Heart right ventricle (tissue), 16 donors: ENCODE measurements at regions of chr12 and their contacts with region 1.

Region 1: DNA sequence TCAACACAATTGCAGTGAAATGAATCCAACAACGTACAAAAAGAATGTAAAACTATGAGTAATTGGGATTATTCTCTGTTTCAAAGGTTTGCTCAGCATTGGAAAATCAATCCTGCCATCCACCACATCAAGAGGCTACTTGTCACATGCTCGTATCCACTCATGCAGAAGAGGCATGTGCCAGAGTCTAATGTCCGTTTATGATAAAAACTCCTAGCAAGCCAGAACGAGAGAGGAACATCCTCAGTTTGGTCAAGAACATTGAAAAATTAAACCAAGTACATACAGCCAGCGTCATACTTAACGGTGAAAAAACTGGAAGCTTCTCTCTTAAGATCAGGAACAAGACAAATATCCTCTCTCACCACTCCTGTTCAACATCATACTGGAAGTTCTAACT is 563.9 kb upstream of the TMEM132C start:
- DNase-seq: no peak
- ATAC-seq: no peak
- H3K4me3 ChIP-seq: no peak overlapping the region
- H3K27ac ChIP-seq: no peak overlapping the region
- H3K4me1 ChIP-seq: no peaks in the 10 kb centered on the region
- H3K27me3 ChIP-seq: peaks cover 0 to 11% (median 0%) of the 10 kb centered on the region in 7 donors
- CTCF ChIP-seq: no peak

Region 2: DNA sequence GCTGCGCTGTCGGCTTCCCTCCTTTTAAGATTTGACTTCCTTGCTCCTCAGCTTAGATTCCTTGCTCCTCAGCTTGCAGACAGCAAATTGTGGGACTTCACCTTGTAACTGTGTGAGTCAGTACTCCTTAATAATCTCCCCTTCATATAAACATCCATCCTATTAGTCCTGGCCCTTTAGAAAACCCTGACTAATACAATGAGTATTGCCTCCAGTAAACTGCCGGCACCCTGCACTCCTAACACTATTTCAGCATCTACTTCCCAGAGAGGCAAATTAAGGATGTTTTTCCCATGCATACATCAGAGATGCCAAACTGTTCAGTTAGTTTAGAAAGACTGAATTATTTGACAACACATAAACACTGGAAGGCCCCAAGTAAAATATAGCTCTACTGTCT is 47.3 kb before region 1 on chr12:
- intact Hi-C with region 1: no loop called
- DNase-seq: no peak
- ATAC-seq: no peak
- H3K4me3 ChIP-seq: no peak overlapping the region
- H3K27ac ChIP-seq: no peak overlapping the region
- H3K4me1 ChIP-seq: no peaks in the 10 kb centered on the region
- H3K27me3 ChIP-seq: peaks cover 0 to 4% (median 0%) of the 10 kb centered on the region in 7 donors
- CTCF ChIP-seq: no peak

Region 3: GRCh38 chr12:127690161-127690560 is 12.9 kb before region 1 on chr12:
- intact Hi-C with region 1: loop called in 1 of 10 experiments (anchors 1 kb)
- DNase-seq: no peak
- ATAC-seq: no peak
- H3K4me3 ChIP-seq: no peak overlapping the region
- H3K27ac ChIP-seq: no peak overlapping the region
- H3K4me1 ChIP-seq: no peaks in the 10 kb centered on the region
- H3K27me3 ChIP-seq: peaks cover 0 to 4% (median 0%) of the 10 kb centered on the region in 7 donors
- CTCF ChIP-seq: peak in 2 of 9 donors; percentile 21 to 23

Region 4: DNA sequence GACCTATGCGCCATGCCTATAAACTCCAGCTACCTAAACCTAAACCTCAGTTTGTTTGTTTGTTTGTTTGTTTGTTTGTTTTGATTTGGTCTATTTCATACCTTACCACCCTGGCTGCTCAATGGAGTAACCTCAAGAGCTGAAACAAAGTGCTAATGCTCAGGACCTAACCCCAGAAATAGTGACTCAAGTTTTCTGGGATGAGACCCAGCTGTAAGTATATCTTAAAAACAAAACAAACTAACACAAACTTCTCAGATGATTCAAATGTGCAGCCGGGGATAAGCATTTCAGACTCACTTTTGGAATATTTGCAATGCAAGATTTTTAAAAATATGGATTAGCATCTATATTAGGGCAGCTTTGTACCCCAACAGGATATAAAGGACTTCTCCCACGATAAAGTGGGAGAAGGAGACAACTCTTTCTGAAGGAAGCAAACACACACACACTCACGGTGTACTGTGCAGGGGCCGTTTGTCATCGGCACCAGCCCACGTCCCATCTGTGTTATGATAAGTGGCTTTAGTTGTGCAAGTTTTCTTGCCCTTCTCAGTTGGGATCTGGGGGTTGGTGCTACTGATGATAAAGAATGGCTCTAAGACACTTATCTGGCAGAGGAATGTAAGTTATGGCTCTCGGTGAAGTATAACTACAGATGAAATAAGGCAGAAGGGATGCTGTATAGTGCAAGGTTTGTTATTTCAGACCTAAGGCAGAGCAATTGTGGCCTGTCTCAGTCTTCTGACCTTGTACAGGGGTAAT is 47.2 kb after region 1 on chr12:
- intact Hi-C with region 1: no loop called
- DNase-seq: no peak
- ATAC-seq: no peak
- H3K4me3 ChIP-seq: no peak overlapping the region
- H3K27ac ChIP-seq: no peak overlapping the region
- H3K4me1 ChIP-seq: no peaks in the 10 kb centered on the region
- H3K27me3 ChIP-seq: peaks cover 0 to 18% (median 0%) of the 10 kb centered on the region in 7 donors
- CTCF ChIP-seq: no peak